ENCODE measurements at regions of chr13 and their contacts with region 1.

Region 1: GRCh38 chr13:111153279-111153976 is 38.3 kb downstream of the ARHGEF7 start:
- DNase-seq: peak; percentile 89 to 95
- H3K4me3 ChIP-seq: peak overlapping the region; percentile 84 to 91
- H3K27ac ChIP-seq: peak overlapping the region; percentile 98
- H3K4me1 ChIP-seq: peaks cover 0 to 83% (median 37%) of the 10 kb centered on the region in 4 donors
- H3K27me3 ChIP-seq: no peaks in the 10 kb centered on the region
- CTCF ChIP-seq: peak in 1 of 2 experiments; percentile 39

Region 2: DNA sequence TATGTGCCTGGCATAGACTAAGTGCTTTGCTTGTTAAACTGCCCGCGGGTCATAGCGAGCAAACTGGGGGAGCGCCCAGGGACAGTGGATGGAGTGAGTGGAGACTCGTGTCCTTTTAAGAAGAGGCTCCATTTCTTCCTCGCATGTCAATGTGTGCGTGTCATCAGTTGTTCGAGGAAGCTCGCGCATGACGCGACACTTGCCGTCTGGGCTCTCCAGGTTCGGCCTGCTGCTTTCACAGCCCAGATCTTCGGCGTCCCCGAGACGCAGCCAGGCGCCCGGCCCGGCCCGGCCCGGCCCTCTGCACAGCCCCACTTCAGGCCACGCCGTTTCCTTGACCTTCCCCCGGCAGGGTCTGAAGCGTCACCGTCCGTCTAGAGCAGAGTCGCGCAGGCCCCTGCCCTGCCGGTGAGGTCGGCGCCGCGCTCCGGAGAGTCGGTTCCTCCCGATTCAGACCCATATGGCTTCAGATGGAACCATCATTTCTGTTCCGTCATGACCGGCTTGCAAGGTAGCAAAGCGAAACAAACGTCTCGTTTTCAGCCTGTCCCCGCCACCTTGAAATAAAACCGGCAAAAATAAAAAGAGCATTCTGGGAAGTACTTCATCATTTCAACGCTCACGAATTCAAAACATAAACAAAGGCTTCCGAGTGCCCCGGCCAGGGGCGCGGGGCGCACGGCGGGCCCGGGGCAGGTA is 38.9 kb before region 1 on chr13:
- intact Hi-C with region 1: loop called (anchors 5 kb)
- DNase-seq: peak; percentile 61 to 81
- H3K4me3 ChIP-seq: peak overlapping the region; percentile 76 to 78
- H3K27ac ChIP-seq: peak overlapping the region; percentile 90
- H3K4me1 ChIP-seq: peaks cover 0 to 42% (median 19%) of the 10 kb centered on the region in 4 donors
- H3K27me3 ChIP-seq: no peaks in the 10 kb centered on the region
- CTCF ChIP-seq: no peak

Measured in tibial artery (tissue), 4 donors.